ENCODE measurements at regions of chr17 and their contacts with region 1.

Region 1: GRCh38 chr17:72104164-72104862 is 16.5 kb upstream of the SOX9 start:
- DNase-seq: peak in 1 of 2 experiments; percentile 63
- H3K4me3 ChIP-seq: no peak overlapping the region
- H3K27ac ChIP-seq: no peak overlapping the region
- H3K4me1 ChIP-seq: peaks cover 12% of the 10 kb centered on the region
- H3K27me3 ChIP-seq: no peaks in the 10 kb centered on the region
- CTCF ChIP-seq: no peak

Region 2: GRCh38 chr17:71276079-71276478 is 828.2 kb before region 1 on chr17:
- CTCF ChIA-PET with region 1: no interaction called
- POLR2A ChIA-PET with region 1: no interaction called
- intact Hi-C with region 1: no loop called
- DNase-seq: no peak
- H3K4me3 ChIP-seq: no peak overlapping the region
- H3K27ac ChIP-seq: no peak overlapping the region
- H3K4me1 ChIP-seq: no peaks in the 10 kb centered on the region
- H3K27me3 ChIP-seq: no peaks in the 10 kb centered on the region
- CTCF ChIP-seq: no peak

Region 3: DNA sequence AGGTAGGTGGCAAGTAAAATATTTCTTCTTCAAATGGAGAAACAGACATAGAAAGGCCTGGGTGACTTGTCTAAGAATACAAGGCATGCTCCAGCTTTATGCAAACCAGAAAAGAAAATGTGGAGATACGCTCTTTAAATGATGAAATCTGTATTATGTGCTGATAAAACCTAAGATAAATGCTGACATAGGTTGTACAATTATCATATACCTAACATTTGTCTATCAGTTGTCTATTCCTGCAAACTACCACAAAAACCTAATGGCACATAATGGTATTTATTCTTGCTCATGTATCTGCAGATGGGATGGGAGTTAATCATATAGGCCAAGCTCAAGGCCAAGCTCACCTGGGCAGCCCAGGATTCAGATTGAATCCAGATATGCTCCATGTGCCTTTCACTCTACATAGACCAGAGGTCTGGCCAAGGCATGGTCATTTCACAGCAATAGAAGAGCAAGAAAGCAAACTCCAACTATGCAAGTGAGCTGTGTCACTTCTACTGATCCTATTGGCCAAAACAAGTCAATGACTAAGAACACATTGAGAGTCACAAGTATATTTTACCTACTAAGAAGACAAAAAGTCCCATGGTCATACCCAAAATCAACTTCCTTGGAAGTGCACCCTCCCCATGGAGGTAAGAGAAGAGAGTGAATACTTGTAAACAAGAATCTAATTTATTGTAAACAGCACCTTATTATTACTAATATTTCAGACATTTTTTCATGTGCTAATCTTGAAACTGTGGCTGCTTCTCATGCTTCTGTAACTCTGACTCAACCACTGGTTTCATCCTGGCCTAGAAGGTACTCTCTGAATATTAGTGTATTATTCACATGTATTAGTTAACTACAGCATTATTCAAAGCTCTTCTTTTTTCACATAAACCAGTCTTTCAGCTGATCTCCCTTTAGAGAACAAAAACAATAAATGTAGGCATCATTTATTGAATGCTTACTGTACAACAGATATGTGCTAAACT is 254.2 kb before region 1 on chr17:
- CTCF ChIA-PET with region 1: no interaction called
- POLR2A ChIA-PET with region 1: interaction called, 20 read pairs
- intact Hi-C with region 1: no loop called
- DNase-seq: no peak
- H3K4me3 ChIP-seq: no peak overlapping the region
- H3K27ac ChIP-seq: no peak overlapping the region
- H3K4me1 ChIP-seq: no peaks in the 10 kb centered on the region
- H3K27me3 ChIP-seq: no peaks in the 10 kb centered on the region
- CTCF ChIP-seq: no peak

Region 4: DNA sequence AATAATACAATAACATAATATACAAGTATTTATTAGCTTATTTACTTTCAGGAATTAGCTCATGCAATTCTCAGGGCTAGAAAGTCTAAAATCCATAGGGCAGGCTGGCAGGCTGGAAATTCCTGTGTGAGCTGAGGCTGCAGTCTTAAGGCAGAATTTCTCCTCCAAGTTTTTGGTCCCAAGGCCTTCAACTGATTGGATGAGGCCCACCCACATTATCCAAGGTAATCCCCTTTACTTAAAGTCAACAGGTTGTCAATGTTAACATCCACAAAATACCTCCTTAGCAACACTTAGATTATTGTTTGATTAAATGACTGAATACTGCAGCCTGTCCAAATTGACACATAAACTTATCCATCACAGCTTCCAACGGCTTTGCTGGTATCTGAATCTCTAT is 16.4 kb before region 1 on chr17:
- CTCF ChIA-PET with region 1: no interaction called
- POLR2A ChIA-PET with region 1: interaction called, 12 read pairs
- intact Hi-C with region 1: no loop called
- DNase-seq: no peak
- H3K4me3 ChIP-seq: no peak overlapping the region
- H3K27ac ChIP-seq: no peak overlapping the region
- H3K4me1 ChIP-seq: no peaks in the 10 kb centered on the region
- H3K27me3 ChIP-seq: no peaks in the 10 kb centered on the region
- CTCF ChIP-seq: no peak

Region 5: DNA sequence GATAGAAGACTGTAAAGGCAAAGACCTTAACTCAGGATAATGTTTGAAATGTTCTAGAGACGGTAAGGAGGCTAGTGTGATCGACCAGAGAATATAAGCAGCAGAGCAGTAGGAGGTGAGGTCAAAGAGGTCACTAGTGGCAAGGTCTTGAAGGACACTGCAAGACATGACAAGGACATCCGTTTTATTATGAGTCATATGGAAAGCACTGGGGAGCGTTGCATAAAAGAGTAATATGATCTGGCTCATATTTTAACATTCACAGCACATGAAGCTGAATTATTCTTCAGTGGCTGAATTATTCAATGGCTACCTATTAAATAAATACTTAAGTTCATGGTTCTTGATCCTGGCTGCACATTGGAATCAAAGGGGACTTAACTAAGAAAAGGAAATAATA is 140.2 kb after region 1 on chr17:
- CTCF ChIA-PET with region 1: no interaction called
- POLR2A ChIA-PET with region 1: no interaction called
- intact Hi-C with region 1: no loop called
- DNase-seq: peak in 1 of 2 experiments; percentile 50
- H3K4me3 ChIP-seq: no peak overlapping the region
- H3K27ac ChIP-seq: peak overlapping the region; percentile 32; the same call in 1 of the 2 replicates
- H3K4me1 ChIP-seq: peaks cover 11% of the 10 kb centered on the region
- H3K27me3 ChIP-seq: no peaks in the 10 kb centered on the region
- CTCF ChIP-seq: no peak

Measured in PC-9 (cell line).